ENCODE measurements at regions of chr2 and their contacts with region 1.

Region 1: DNA sequence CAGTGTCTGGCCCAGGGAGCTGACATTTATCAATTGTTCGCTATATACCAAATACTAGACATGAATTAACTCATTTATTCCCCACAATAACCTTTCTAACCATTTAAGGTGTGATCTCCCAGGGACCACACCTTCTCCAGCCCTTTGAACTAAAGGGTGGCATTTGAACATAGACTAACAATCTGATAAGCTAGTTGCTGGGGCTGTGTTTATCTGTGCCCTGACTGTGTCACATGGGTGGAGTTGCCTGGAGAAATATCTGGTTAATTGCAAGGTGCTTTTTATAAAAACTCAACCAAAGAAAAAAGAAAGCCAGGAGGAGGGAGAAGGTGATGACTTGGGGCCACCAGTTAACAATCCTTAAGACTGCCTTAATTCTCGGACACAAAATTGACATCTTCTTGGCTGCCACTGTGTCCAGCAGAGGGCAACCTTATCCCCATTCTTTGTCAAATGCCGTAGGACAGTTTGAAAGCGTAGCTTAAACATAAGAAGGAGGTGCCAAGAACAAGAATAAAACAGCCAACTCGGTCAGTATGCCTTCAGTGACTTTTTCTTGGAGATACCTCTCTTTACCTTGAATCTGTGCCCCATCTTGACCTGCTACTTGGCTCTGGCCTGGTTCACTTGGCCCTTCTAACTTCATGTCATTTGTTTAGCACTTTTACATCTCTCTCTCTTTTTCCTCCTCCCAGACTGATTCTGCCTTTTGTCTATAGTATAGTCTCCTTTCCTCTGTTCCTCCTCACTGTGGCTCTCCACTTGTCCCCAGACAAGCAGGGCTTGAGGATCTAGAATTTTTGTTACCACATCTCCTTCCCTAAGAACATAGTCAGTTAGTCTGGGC is 183.4 kb downstream of the MYO3B start:
- DNase-seq: peak; percentile 87
- H3K4me3 Mint-ChIP-seq: peak overlapping the region; percentile 40
- H3K27ac Mint-ChIP-seq: peak overlapping the region; percentile 97
- H3K4me1 Mint-ChIP-seq: peaks cover 38% of the 10 kb centered on the region
- H3K27me3 Mint-ChIP-seq: peaks cover 4% of the 10 kb centered on the region

Region 2: DNA sequence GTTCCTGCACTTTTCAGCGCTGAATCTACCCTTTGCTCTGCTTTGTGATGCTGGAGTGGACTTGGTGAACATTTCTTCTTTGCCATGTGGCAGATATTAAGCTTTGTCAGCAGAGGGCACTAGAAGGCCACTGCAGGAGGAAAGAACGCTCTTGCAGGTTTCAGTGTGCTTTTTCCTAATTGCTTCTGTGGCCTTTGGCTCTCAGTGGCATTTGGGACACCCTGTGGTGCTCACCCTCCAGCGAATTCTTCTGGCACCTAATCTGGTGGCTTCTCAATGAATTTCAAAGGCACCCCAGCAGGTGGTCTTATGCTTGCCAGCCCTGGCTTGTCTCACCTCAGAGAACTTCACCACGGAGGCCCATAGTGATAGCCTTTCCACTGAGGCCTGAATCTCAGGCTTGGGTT is 36.7 kb before region 1 on chr2:
- intact Hi-C with region 1: loop called (anchors 1 kb)
- DNase-seq: peak; percentile 85
- H3K4me3 Mint-ChIP-seq: no peak overlapping the region
- H3K27ac Mint-ChIP-seq: no peak overlapping the region
- H3K4me1 Mint-ChIP-seq: no peaks in the 10 kb centered on the region
- H3K27me3 Mint-ChIP-seq: peaks cover 6% of the 10 kb centered on the region

Region 3: GRCh38 chr2:170770606-170771420 is 409.5 kb after region 1 on chr2:
- intact Hi-C with region 1: loop called (anchors 2 kb)
- DNase-seq: peak; percentile 89
- H3K4me3 Mint-ChIP-seq: peak overlapping the region; percentile 85
- H3K27ac Mint-ChIP-seq: peak overlapping the region; percentile 82
- H3K4me1 Mint-ChIP-seq: peaks cover 5% of the 10 kb centered on the region
- H3K27me3 Mint-ChIP-seq: peaks cover 31% of the 10 kb centered on the region